ENCODE measurements at regions of chr1 and their contacts with region 1.

Region 1: GRCh38 chr1:166910396-166910994 is 34.4 kb upstream of the TADA1 start:
- DNase-seq: peak; percentile 90
- H3K27ac ChIP-seq: no peak overlapping the region
- CTCF ChIP-seq: peak; percentile 80

Region 2: DNA sequence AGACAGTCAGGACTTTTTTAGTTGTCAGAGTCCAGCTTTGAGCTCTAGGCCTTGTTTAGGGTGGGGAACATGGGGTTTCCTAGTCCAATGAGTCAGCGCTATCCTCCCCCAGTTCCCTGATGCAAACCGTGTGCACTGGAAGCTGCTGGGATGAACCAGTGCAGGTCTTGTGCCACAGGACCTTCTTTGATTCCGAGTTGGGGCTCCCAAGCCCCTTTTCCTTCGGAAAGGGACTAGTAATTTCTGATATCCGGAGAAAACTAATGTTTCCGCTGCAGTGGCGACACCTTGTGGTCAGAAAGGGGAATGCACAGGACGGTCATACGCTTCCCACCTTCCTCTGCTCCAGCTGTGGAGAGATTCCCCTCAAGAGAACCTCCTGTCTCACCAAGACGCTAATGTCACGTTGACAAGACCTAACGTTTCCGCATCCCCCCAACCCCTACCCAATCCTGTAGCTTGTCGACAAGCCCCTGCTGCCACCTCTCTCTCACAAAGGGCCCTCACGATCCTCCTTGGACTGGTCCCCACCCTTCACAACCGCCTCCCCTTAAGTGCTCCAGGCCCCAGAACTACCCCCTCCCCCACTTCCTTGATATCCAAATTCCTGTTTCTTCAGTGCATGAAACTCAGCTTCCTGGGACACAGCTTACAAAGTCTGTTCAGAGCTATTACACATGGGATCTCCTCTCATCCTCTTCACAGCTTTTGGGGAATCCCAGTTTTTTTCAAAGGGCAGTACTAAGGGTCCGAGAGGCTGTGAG is 148.7 kb after region 1 on chr1:
- CTCF ChIA-PET with region 1: interaction called, 119 read pairs
- POLR2A ChIA-PET with region 1: no interaction called
- DNase-seq: peak; percentile 49
- H3K27ac ChIP-seq: no peak overlapping the region
- CTCF ChIP-seq: peak; percentile 91

Region 3: DNA sequence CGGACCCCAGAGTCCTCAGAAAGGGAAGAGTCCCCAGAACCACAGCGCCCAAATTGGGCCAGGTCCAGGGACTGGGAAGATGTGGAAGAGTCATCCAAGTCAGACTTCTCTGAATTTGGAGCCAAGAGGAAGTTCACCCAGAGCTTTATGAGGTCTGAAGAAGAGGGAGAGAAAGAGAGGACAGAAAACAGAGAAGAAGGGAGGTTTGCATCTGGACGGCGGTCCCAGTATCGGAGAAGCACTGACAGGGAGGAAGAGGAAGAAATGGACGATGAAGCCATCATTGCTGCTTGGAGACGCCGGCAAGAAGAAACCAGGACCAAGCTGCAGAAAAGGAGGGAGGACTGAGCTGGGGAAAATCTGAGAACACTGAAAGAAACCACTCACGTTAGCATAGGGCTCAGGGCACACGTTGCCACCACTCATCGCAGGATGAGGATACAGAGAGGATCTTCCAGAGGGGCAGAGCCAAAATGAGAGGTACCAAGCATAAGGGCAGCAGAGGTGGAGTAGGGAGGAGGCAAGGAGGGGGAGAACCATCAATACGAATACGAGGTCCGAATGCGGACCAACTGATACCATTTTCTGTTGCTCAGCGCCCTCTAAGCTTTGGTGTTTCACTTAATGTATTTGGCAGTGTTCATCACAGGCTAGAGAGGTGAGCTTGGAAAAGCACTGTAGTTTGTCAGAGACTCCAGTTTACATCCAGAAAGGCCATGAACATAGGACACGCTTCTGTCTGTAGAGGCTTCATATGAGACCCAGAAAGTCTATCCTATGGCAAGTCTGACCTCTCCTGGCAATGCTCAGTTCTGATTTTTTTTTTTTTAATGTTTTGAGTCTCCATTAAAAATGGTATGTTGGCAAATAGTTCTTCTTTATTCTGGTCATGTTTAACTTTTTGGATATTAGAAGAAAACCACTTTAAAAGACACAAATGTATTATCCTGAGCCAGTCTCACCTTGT is 218.0 kb after region 1 on chr1:
- CTCF ChIA-PET with region 1: interaction called, 10 read pairs
- POLR2A ChIA-PET with region 1: no interaction called
- DNase-seq: no peak
- H3K27ac ChIP-seq: no peak overlapping the region
- CTCF ChIP-seq: no peak